ENCODE measurements at regions of chr1 and their contacts with region 1.

Region 1: GRCh38 chr1:100902365-100902764 is 6.5 kb downstream of the SLC30A7 start:
- DNase-seq: no peak
- H3K4me3 ChIP-seq: no peak overlapping the region
- CTCF ChIP-seq: no peak
- POLR2A ChIP-seq: no peak

Region 2: DNA sequence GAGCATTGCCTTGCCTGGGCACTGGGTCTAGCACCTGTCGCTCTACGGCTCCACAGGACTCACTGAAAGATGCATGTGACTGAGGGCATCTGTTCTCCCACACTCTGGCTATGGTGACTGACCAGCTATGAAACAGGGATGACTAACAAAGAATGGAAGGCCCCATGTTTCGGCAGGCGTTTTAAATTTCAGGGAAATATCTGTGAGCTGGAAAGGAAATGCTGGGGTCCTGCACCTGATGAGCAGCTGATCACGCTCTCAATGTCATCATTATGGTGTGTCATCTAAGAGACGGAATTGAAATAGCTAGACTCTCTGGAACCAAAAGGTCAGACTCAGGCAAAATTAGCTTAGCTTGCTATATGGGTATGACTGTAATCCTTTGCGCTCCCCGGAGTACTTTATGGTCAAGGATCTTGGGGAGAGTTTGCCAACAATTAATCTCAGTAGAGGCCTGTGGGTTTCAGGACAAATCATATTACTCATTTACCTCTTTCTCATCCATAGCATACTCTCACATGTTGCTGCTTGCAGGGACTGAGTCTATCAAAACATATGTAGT is 1280.9 kb before region 1 on chr1:
- intact Hi-C with region 1: no loop called
- DNase-seq: no peak
- H3K4me3 ChIP-seq: no peak overlapping the region
- CTCF ChIP-seq: no peak
- POLR2A ChIP-seq: no peak

Region 3: GRCh38 chr1:100972185-100972584 is 69.8 kb after region 1 on chr1:
- intact Hi-C with region 1: loop called (anchors 2 kb)
- DNase-seq: no peak
- H3K4me3 ChIP-seq: no peak overlapping the region
- CTCF ChIP-seq: no peak
- POLR2A ChIP-seq: no peak

Measured in lower leg skin (tissue), 4 donors.